Panc1 (cell line): ENCODE measurements at regions of chr6 and their contacts with region 1.

Region 1: DNA sequence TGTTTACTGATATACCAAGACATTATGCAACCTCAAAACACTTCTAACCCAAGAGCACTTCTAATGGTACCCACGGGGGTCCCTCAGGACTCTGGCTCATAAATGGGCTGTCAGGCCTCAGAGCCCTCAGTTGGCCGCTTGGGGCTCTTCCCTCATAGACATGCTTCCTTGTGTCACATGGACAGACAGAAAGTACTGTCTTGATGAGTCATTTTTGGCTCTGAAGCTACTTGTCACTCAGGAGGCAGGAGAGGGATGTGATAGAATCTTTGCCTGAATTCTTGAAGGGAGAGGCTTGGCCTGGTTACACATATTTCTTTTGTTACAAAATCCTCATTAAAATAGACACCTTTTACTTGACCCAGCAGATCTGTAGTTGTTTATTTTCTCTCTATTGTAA is 15.1 kb upstream of the EDN1 start:
- DNase-seq: no peak
- ATAC-seq: no peak
- H3K4me3 ChIP-seq: no peak overlapping the region
- H3K27ac ChIP-seq: 0 out of 2 replicates have a peak overlapping the region, but pooled peaks have one; percentile 41
- H3K4me1 ChIP-seq: peaks cover 14% of the 10 kb centered on the region; the same call in 1 of the 2 replicates
- H3K27me3 ChIP-seq: no peaks in the 10 kb centered on the region
- CTCF ChIP-seq: no peak

Region 2: GRCh38 chr6:12132351-12133222 is 142.5 kb before region 1 on chr6:
- CTCF ChIA-PET with region 1: no interaction called
- POLR2A ChIA-PET with region 1: no interaction called
- in situ Hi-C with region 1: no loop called
- intact Hi-C with region 1: no loop called
- DNase-seq: no peak
- ATAC-seq: no peak
- H3K4me3 ChIP-seq: no peak overlapping the region
- H3K27ac ChIP-seq: no peak overlapping the region
- H3K4me1 ChIP-seq: 0 out of 2 replicates have a peak, but pooled peaks cover 4% of the 10 kb centered on the region
- H3K27me3 ChIP-seq: no peaks in the 10 kb centered on the region
- CTCF ChIP-seq: no peak

Region 3: GRCh38 chr6:12241493-12242175 is 33.5 kb before region 1 on chr6:
- CTCF ChIA-PET with region 1: no interaction called
- POLR2A ChIA-PET with region 1: interaction called, 10 read pairs
- in situ Hi-C with region 1: no loop called
- intact Hi-C with region 1: no loop called
- DNase-seq: no peak
- ATAC-seq: no peak
- H3K4me3 ChIP-seq: no peak overlapping the region
- H3K27ac ChIP-seq: no peak overlapping the region
- H3K4me1 ChIP-seq: no peaks in the 10 kb centered on the region
- H3K27me3 ChIP-seq: no peaks in the 10 kb centered on the region
- CTCF ChIP-seq: no peak

Region 4: GRCh38 chr6:12516070-12516469 is 241.0 kb after region 1 on chr6:
- CTCF ChIA-PET with region 1: no interaction called
- POLR2A ChIA-PET with region 1: no interaction called
- in situ Hi-C with region 1: no loop called
- intact Hi-C with region 1: no loop called
- DNase-seq: no peak
- ATAC-seq: 0 out of 2 replicates have a peak, but pooled peaks have one; percentile 53
- H3K4me3 ChIP-seq: no peak overlapping the region
- H3K27ac ChIP-seq: no peak overlapping the region
- H3K4me1 ChIP-seq: no peaks in the 10 kb centered on the region
- H3K27me3 ChIP-seq: no peaks in the 10 kb centered on the region
- CTCF ChIP-seq: no peak

Region 5: DNA sequence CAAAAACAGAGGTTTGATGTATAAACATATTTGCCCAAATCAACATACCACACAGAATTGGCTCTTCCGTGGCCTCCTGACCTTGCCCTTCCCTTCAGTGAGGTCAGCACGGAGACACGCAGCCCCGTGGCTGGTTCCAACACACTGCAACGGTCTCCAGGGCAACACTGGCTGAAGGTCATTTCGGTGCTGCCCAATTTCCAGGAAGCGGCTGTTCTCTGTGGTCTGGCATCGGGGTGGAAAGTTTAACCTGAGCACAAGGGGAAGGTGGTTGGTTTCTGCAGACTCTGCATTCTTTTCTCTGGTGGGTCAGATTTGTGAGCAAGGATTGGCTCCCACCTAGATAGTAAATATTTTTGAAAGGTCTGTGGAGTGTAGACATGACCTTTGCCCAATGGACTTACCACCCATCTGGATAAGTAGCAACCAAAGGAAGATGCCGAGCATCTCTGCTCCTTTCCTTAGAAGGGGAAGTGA is 263.8 kb after region 1 on chr6:
- CTCF ChIA-PET with region 1: no interaction called
- POLR2A ChIA-PET with region 1: no interaction called
- in situ Hi-C with region 1: no loop called
- intact Hi-C with region 1: no loop called
- DNase-seq: no peak
- ATAC-seq: no peak
- H3K4me3 ChIP-seq: no peak overlapping the region
- H3K27ac ChIP-seq: no peak overlapping the region
- H3K4me1 ChIP-seq: no peaks in the 10 kb centered on the region
- H3K27me3 ChIP-seq: no peaks in the 10 kb centered on the region
- CTCF ChIP-seq: no peak